ENCODE measurements at regions of chr16 and their contacts with region 1.

Region 1: GRCh38 chr16:74862741-74863244 is 88.2 kb upstream of the FA2H start:
- DNase-seq: no peak

Region 2: DNA sequence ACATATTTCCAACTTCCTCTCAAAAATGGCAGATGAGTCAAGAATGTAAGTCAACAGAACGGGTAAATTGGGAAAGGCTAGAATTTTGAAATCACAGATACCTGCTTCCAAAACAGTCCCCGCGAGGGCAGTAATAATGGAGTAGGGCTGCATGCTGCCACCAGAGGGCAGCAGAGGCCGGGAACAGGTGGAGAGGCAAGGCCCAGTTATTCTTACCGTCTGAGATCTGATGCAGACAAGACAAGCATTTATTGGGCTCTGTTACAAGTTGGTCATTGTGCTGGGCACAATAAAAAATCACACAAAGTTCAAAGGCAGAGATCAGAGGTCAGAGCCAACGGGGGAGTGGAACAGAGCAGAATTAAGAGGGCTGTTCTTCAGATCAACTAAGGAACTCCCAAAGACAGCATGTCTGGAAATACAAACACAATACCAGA is 153.3 kb before region 1 on chr16:
- intact Hi-C with region 1: loop called (anchors 2 kb)
- DNase-seq: peak; percentile 88

Region 3: DNA sequence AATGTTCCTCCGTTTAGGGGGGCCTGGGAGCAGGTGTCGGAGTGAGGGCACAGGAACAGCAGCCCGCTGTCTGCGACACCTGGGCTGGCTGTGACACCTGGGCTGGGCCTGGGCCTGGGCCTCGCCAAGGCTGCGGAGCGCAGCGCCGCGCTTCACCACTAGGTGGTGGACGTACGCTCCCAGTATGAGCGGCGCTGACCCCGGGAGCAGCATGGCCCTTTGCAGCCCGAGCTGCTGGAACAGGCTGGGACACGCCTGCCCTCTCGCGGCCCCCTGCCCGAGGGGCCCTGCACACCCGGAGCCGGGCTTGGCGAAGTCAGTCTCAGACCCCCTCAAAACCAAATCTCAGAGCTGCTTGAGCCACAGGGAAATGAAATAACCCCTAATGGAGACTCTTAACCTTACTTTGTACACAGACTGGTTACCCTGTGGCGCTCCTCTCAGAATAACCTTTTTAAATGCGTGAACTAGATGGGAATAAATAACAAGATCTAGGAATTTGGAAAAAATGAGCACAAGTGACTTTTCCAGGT is 49.6 kb before region 1 on chr16:
- intact Hi-C with region 1: loop called (anchors 2 kb)
- DNase-seq: peak; percentile 85